A673 (cell line): ENCODE measurements at regions of chr2 and their contacts with region 1.

Region 1: GRCh38 chr2:143841935-143842334 is 678.0 kb downstream of the ZEB2 start:
- DNase-seq: peak; percentile 48
- H3K4me3 ChIP-seq: no peak overlapping the region
- H3K27ac ChIP-seq: no peak overlapping the region
- H3K4me1 ChIP-seq: peaks cover 8% of the 10 kb centered on the region
- H3K27me3 ChIP-seq: no peaks in the 10 kb centered on the region
- CTCF ChIP-seq: peak; percentile 48

Region 2: DNA sequence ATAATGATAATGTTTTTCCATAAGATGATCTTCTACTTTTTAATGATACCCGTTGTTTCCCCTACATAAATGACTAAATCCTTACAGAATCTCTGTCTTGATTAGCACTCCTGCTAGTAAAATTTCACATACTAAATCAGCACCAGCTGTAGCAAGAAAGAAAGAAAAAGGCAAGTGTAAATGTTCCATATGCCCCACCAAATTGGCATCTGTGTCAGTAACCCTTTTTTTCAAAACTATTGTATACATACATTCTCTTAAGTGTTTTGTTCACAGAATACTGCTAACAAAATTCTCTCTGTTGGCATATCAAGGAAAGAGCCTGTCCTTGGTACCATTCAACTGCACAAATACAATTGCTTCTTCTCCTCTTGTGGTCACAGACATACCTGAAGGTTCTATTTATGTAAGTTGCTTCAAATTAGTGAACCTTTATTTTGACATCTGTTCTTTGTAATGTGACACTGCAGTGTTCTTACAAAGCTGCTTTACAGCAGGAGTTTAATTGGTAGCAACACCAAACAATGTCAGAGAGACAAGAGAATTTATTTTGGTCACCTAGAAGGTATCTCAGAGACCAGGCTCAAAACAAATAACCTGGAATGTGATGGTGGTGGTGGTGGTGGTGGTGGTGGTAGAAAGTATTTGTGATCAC is 36.1 kb after region 1 on chr2:
- CTCF ChIA-PET with region 1: no interaction called
- POLR2A ChIA-PET with region 1: no interaction called
- intact Hi-C with region 1: no loop called
- DNase-seq: no peak
- H3K4me3 ChIP-seq: no peak overlapping the region
- H3K27ac ChIP-seq: no peak overlapping the region
- H3K4me1 ChIP-seq: no peaks in the 10 kb centered on the region
- H3K27me3 ChIP-seq: no peaks in the 10 kb centered on the region
- CTCF ChIP-seq: no peak

Region 3: GRCh38 chr2:145043399-145043834 is 1201.5 kb after region 1 on chr2:
- CTCF ChIA-PET with region 1: no interaction called
- POLR2A ChIA-PET with region 1: no interaction called
- intact Hi-C with region 1: loop called (anchors 5 kb)
- DNase-seq: peak; percentile 63
- H3K4me3 ChIP-seq: no peak overlapping the region
- H3K27ac ChIP-seq: peak overlapping the region; percentile 99
- H3K4me1 ChIP-seq: peaks cover 36% of the 10 kb centered on the region
- H3K27me3 ChIP-seq: no peaks in the 10 kb centered on the region
- CTCF ChIP-seq: peak; percentile 48